ENCODE measurements at regions of chrX and their contacts with region 1.

Region 1: GRCh38 chrX:152658302-152658701 is 20.6 kb downstream of the GABRQ start:
- DNase-seq: no peak
- CTCF ChIP-seq: no peak

Region 2: GRCh38 chrX:152821145-152821765 is 163.0 kb after region 1 on chrX:
- in situ Hi-C with region 1: loop called (anchors 25 kb)
- DNase-seq: no peak
- CTCF ChIP-seq: peak; percentile 58